CD4-positive, alpha-beta memory T cell (primary cell): ENCODE measurements at regions of chr17 and their contacts with region 1.

Region 1: DNA sequence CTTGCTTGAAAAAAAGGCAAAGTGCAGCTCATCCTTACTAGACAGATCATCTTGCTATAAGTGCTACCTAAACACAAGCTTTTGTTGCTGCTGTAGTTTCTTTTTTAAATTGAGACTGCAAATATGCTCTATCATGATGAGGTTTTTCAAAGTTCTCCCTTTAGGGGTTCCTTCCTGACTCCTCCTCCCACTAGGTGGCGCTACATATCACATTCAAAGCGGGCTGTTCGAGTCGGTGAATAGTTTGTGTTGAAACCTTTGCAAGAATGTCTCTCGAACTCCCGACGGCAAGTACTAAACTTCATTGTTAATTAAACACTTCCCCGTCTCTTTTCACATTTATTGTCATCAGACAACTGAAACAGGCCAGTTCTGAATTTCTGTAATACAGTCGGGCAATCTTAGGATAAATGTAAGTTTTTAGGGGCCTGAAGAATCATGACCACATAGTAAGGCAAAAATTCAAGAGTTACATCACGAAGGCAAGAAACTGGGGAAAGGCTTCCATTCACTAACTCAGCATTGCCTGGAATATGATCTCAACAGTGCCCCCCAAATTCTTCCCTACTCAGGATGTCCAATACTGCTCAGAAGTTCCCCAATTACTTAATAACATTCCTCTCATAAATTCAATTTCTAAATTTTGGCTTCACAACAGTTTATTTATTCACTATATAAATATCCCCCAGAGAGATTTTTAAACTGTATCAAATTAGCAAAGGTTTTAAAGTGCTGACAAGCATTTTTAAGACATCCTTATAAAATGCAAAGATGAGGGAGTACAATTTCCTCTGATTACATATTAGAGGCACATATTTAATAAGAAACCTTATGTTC is 6.7 kb downstream of the HS3ST3A1 start:
- DNase-seq: peak; percentile 76 to 84 (median 80)
- H3K4me3 ChIP-seq: no peak overlapping the region
- H3K4me3 Mint-ChIP-seq: no peak overlapping the region
- H3K27ac ChIP-seq: no peak overlapping the region
- H3K27ac Mint-ChIP-seq: no peak overlapping the region
- H3K4me1 ChIP-seq: no peaks in the 10 kb centered on the region
- H3K4me1 Mint-ChIP-seq: peaks cover 3 to 9% (median 6%) of the 10 kb centered on the region in 4 donors
- H3K27me3 ChIP-seq: peaks cover 21% of the 10 kb centered on the region
- H3K27me3 Mint-ChIP-seq: peaks cover 13 to 17% of the 10 kb centered on the region in 2 donors

Region 2: DNA sequence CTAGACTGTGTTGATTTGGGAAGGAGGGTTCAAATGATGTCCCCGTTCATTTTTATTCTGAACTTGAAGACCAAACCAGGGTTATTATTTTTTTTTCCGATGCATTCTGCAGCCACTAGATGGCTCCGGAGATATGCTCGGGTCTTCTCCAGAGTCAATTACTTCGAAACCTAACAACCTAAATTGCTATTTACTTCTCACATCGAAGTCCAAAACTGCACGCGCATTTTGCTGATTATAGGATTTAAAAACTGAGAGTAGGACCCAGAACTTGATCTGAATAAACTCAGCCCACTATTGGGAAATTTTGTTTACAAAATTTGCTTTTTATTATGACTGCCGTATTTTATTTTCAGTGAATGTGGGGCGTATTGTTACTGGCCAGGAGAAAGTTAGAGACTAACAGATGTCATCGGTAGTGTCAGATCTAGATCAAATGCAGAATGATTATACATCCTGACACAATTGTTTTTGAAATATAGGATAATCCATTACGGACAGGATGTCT is 257.1 kb before region 1 on chr17:
- CTCF ChIA-PET with region 1: no interaction called
- POLR2A ChIA-PET with region 1: no interaction called
- intact Hi-C with region 1: loop called (anchors 5 kb)
- DNase-seq: peak in 4 of 5 donors; percentile 17 to 20 (median 18)
- H3K4me3 ChIP-seq: no peak overlapping the region
- H3K4me3 Mint-ChIP-seq: peak overlapping the region in 4 of 8 donors; percentile 1 to 49 (median 24)
- H3K27ac ChIP-seq: no peak overlapping the region
- H3K27ac Mint-ChIP-seq: no peak overlapping the region
- H3K4me1 ChIP-seq: peaks cover 4% of the 10 kb centered on the region
- H3K4me1 Mint-ChIP-seq: peaks cover 0 to 7% (median 2%) of the 10 kb centered on the region in 4 donors
- H3K27me3 ChIP-seq: no peaks in the 10 kb centered on the region
- H3K27me3 Mint-ChIP-seq: peaks cover 18 to 22% of the 10 kb centered on the region in 2 donors

Region 3: DNA sequence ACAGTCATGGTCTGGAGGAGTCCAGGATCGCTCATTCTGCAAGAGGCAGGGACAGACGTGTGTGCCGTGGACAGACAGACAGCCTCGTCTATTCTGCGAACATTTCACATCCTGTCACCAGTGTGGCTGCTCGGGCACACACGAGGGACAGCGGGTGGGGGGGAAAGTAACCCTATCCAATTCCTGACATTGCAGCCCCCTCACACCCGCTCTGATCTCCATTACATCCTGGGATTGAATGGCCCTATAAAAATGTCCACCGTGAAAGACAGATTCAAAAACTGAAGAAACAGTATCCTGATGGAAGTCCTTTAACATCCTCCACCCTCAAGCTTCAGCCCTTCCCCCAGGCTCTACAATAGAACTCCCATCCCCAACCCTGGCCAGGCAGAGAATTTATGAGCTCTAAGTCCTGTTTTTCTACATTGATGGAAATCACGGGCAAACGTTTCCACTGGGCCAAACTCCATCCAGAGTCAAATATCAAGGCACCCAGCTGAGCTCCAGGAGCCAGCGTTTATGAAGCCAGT is 32.6 kb before region 1 on chr17:
- CTCF ChIA-PET with region 1: no interaction called
- POLR2A ChIA-PET with region 1: no interaction called
- intact Hi-C with region 1: no loop called
- DNase-seq: no peak
- H3K4me3 ChIP-seq: no peak overlapping the region
- H3K4me3 Mint-ChIP-seq: no peak overlapping the region
- H3K27ac ChIP-seq: no peak overlapping the region
- H3K27ac Mint-ChIP-seq: no peak overlapping the region
- H3K4me1 ChIP-seq: no peaks in the 10 kb centered on the region
- H3K4me1 Mint-ChIP-seq: peaks cover 6 to 13% (median 10%) of the 10 kb centered on the region in 4 donors
- H3K27me3 ChIP-seq: no peaks in the 10 kb centered on the region
- H3K27me3 Mint-ChIP-seq: peaks cover 2% of the 10 kb centered on the region in 2 donors

Region 4: GRCh38 chr17:13813347-13814240 is 218.6 kb after region 1 on chr17:
- CTCF ChIA-PET with region 1: no interaction called
- POLR2A ChIA-PET with region 1: no interaction called
- intact Hi-C with region 1: no loop called
- DNase-seq: no peak
- H3K4me3 ChIP-seq: no peak overlapping the region
- H3K4me3 Mint-ChIP-seq: no peak overlapping the region
- H3K27ac ChIP-seq: no peak overlapping the region
- H3K27ac Mint-ChIP-seq: no peak overlapping the region
- H3K4me1 ChIP-seq: peaks cover 3% of the 10 kb centered on the region
- H3K4me1 Mint-ChIP-seq: no peaks in the 10 kb centered on the region
- H3K27me3 ChIP-seq: no peaks in the 10 kb centered on the region
- H3K27me3 Mint-ChIP-seq: no peaks in the 10 kb centered on the region

Region 5: GRCh38 chr17:14203388-14203787 is 608.4 kb after region 1 on chr17:
- CTCF ChIA-PET with region 1: interaction called, 3 read pairs
- POLR2A ChIA-PET with region 1: no interaction called
- intact Hi-C with region 1: loop called (anchors 5 kb)
- DNase-seq: peak; percentile 47 to 75 (median 57)
- H3K4me3 ChIP-seq: no peak overlapping the region
- H3K4me3 Mint-ChIP-seq: peak overlapping the region; percentile 41 to 81 (median 52)
- H3K27ac ChIP-seq: peak overlapping the region; percentile 60
- H3K27ac Mint-ChIP-seq: peak overlapping the region; percentile 87 to 96 (median 89)
- H3K4me1 ChIP-seq: peaks cover 92% of the 10 kb centered on the region
- H3K4me1 Mint-ChIP-seq: peaks cover 73 to 98% (median 84%) of the 10 kb centered on the region in 4 donors
- H3K27me3 ChIP-seq: no peaks in the 10 kb centered on the region
- H3K27me3 Mint-ChIP-seq: no peaks in the 10 kb centered on the region

Region 6: GRCh38 chr17:14553855-14554254 is 958.9 kb after region 1 on chr17:
- CTCF ChIA-PET with region 1: interaction called, 4 read pairs
- POLR2A ChIA-PET with region 1: no interaction called
- intact Hi-C with region 1: loop called (anchors 1 kb)
- DNase-seq: no peak
- H3K4me3 ChIP-seq: no peak overlapping the region
- H3K4me3 Mint-ChIP-seq: no peak overlapping the region
- H3K27ac ChIP-seq: no peak overlapping the region
- H3K27ac Mint-ChIP-seq: no peak overlapping the region
- H3K4me1 ChIP-seq: no peaks in the 10 kb centered on the region
- H3K4me1 Mint-ChIP-seq: peaks cover 0 to 8% (median 1%) of the 10 kb centered on the region in 4 donors
- H3K27me3 ChIP-seq: no peaks in the 10 kb centered on the region
- H3K27me3 Mint-ChIP-seq: peaks cover 0 to 1% of the 10 kb centered on the region in 2 donors

Region 7: DNA sequence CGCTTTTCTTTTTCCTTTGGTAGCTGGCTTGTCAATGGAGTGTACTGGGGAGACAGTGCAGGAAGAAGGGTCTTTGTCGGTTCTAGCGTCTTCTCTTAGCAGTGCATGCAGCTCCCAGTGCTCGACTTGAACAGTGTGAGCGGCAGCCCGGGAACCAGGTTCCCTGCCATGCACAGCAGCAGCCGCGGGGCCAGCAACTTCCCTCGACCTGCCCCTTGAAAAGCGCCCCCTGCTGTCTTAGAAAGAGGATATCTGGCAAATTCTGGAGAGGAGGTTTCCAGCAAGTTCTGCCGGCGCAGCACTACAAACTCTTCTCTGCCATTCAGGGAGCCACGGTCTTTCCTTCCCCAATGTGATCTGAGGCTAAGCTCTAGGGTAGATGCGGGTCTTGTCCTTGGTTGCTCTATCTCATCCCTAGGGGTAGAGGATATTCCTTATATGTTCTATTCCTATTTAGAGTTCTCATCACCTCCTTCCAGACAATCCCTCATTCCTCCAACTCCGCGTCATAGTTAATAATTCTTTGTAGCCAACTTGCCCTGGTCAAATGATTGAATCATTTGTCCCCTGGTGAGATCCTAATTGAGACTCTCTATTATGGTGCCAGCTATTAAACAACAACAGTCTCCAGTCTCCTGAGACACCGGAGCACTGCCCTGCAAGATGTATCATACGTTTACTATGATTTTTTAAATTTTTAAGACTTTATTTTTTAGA is 1218.8 kb after region 1 on chr17:
- CTCF ChIA-PET with region 1: interaction called, 5 read pairs
- POLR2A ChIA-PET with region 1: no interaction called
- intact Hi-C with region 1: loop called (anchors 1 kb)
- DNase-seq: peak in 4 of 5 donors; percentile 21 to 34 (median 26)
- H3K4me3 ChIP-seq: no peak overlapping the region
- H3K4me3 Mint-ChIP-seq: no peak overlapping the region
- H3K27ac ChIP-seq: no peak overlapping the region
- H3K27ac Mint-ChIP-seq: no peak overlapping the region
- H3K4me1 ChIP-seq: no peaks in the 10 kb centered on the region
- H3K4me1 Mint-ChIP-seq: no peaks in the 10 kb centered on the region
- H3K27me3 ChIP-seq: no peaks in the 10 kb centered on the region
- H3K27me3 Mint-ChIP-seq: peaks cover 0 to 2% of the 10 kb centered on the region in 2 donors

Region 8: DNA sequence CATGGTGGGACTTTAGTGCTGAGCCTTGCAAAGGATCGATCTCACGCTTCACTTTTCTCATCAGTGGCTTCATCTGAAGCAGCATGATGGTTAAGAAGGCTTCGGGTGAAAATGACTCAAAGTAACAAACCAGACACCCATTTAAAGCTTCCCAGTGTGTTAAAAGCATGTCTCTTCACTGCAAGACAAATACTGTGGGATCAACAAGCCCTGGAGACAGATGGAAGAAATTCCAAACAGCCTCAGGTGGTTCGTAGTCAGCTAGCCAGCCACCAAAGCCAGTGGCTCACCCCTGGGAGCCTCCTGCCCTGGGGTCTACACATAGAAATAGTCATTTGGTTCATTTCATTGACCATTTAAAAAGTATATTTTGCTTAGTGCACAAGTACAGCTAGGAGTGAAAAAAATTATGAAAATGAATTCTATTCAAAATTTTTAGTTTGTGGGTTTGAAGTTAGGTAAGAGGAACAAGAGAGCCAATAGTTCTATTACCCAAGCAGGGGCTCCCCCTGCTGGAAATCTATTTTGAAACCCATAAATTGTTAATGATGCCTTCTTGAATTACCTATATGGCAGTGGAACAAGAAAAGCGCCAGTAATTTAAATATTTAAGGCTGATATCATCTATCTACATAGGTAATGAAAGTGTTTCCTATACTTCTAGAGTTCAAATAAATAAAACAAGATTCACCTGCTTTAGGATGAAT is 1618.6 kb after region 1 on chr17:
- CTCF ChIA-PET with region 1: no interaction called
- POLR2A ChIA-PET with region 1: no interaction called
- intact Hi-C with region 1: loop called (anchors 10 kb)
- DNase-seq: no peak
- H3K4me3 ChIP-seq: no peak overlapping the region
- H3K4me3 Mint-ChIP-seq: no peak overlapping the region
- H3K27ac ChIP-seq: no peak overlapping the region
- H3K27ac Mint-ChIP-seq: no peak overlapping the region
- H3K4me1 ChIP-seq: no peaks in the 10 kb centered on the region
- H3K4me1 Mint-ChIP-seq: no peaks in the 10 kb centered on the region
- H3K27me3 ChIP-seq: no peaks in the 10 kb centered on the region
- H3K27me3 Mint-ChIP-seq: peaks cover 5 to 14% of the 10 kb centered on the region in 2 donors